ENCODE measurements at regions of chr19 and their contacts with region 1.

Region 1: DNA sequence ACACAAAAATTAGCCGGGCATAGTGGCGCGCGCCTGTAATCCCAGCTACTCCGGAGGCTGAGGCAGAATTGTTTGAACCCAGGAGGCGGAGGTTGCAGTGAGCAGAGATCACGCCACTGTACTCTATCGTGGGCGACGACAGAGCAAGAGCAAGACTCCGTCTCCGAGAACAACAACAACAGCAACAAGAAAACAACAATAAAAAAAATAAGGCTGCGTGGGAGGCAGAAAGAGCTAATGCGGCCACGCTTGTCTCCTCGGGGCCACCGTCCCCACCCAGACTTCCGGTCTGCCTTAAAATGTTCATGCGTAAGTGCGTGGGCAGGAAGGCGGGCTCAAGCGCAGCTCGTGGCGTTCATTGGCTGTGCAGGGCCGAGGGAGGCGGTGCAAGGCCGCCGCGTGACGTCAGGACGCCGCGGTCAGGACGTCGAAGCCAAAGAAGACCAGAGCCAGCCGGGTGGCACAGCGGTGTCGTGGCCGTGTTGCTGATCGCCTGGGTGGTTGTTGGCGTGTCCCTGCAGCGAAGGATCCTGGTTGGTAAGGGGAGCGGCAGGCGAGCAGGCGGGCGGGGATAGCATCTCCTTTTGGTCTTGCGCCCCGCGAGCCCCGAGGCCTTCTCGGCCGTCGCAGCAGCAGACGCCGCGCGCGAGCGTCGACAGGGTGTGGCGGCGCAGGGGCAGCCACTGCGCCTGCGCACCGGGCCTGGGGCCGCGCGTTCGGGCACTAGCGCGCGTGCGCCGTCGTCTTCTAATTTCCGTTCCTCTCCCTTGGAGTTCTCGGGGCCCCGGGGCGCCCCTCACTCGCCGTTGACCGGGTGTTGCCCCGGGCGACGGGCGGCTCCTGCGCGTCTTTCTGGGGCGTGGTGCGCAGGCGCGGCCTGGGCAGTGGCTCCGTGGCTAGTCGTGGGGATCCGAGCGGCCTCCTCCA is at the start of gene LENG8:
- DNase-seq: peak; percentile 99
- ATAC-seq: peak; percentile 98
- total RNA-seq, gene LENG8: 59.0 TPM

Region 2: DNA sequence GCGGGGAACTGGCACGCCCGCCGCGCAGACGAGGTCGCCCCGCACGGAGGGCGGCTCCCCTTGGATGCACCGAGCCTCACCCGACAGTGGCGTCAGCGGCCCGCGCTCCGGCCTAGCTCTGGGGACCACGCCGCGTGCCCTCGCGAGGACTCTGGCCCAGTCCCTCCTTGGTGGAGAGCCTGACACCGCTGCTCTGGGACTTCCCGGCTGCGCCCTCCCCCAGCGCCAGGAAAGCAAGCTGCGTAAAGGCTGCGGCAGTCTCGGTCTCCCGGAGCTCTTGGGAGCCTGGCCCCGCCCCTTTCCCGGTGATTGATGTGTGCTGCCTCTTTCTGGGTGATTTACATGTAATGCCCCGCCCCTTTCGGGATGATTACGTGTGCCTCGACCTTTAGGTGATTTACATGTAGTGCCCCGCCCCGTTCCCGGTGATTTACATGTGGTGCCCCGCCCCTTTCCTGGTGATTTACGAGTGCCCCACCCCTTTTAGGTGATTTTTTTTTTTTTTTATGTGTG is 14.6 kb after region 1 on chr19 and contains the start of gene LENG9:
- intact Hi-C with region 1: loop called (anchors 1 kb)
- DNase-seq: peak; percentile 99
- ATAC-seq: peak; percentile 79
- total RNA-seq, gene LENG9: 1.8 TPM